B cell (primary cell): ENCODE measurements at regions of chr19 and their contacts with region 1.

Region 1: GRCh38 chr19:16143399-16144245 is at the start of gene HSH2D:
- DNase-seq: peak; percentile 95
- ATAC-seq: peak; percentile 71
- H3K4me3 ChIP-seq: peak within 1 kb of the TSS; percentile 73 to 94 (median 91)
- H3K4me3 Mint-ChIP-seq: peak within 1 kb of the TSS; percentile 95
- H3K27ac ChIP-seq: peak within 1 kb of the TSS; percentile 95 to 97
- H3K27ac Mint-ChIP-seq: peak within 1 kb of the TSS; percentile 100
- H3K4me1 ChIP-seq: peaks cover 71 to 93% of the 10 kb centered on the region in 2 donors
- H3K4me1 Mint-ChIP-seq: peaks cover 78% of the 10 kb centered on the region
- H3K27me3 ChIP-seq: no peaks in the 10 kb centered on the region
- H3K27me3 Mint-ChIP-seq: no peaks in the 10 kb centered on the region
- CTCF ChIP-seq: no peak
- total RNA-seq, gene HSH2D: 254 and 259 TPM in 2 replicates

Region 2: DNA sequence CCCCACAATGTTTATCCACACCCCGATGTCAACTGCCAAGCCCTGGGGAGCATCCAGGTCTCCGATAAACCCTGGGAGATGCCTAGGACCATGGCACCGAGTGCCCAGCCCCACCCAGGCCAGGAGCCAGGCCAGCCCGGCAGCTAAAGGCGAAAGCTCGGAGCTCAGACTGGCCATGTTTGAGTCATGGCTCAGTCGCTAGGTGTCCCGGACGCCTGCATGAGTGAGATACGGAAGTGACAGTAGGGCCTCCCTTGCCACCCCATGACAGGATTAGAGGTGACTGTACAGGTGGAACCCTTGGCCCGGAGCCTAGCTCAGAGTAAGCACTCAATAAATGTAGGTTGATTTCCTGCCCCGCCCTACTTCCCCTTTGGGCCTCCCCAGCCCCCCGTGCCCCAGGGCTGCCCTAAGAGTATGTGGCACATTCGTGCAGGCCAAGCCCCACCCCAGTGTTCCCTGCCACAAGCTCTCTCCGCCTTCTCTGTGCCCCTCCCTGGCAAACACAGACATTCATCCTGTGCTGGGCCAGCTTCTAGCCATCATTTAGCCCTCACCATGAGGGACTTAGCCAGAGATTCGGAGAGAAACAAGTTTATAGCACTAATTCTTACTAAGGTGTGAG is 73.1 kb before region 1 on chr19:
- CTCF ChIA-PET with region 1: interaction called, 7 read pairs
- POLR2A ChIA-PET with region 1: interaction called, 15 read pairs
- intact Hi-C with region 1: loop called (anchors 2 kb)
- DNase-seq: peak; percentile 95
- ATAC-seq: peak; percentile 91
- H3K4me3 ChIP-seq: peak overlapping the region in 4 of 5 experiments; percentile 30 to 56 (median 43)
- H3K4me3 Mint-ChIP-seq: no peak overlapping the region
- H3K27ac ChIP-seq: peak overlapping the region; percentile 96 to 98
- H3K27ac Mint-ChIP-seq: no peak overlapping the region
- H3K4me1 ChIP-seq: peaks cover 23 to 42% of the 10 kb centered on the region in 2 donors
- H3K4me1 Mint-ChIP-seq: peaks cover 26% of the 10 kb centered on the region
- H3K27me3 ChIP-seq: no peaks in the 10 kb centered on the region
- H3K27me3 Mint-ChIP-seq: no peaks in the 10 kb centered on the region
- CTCF ChIP-seq: peak; percentile 37

Region 3: DNA sequence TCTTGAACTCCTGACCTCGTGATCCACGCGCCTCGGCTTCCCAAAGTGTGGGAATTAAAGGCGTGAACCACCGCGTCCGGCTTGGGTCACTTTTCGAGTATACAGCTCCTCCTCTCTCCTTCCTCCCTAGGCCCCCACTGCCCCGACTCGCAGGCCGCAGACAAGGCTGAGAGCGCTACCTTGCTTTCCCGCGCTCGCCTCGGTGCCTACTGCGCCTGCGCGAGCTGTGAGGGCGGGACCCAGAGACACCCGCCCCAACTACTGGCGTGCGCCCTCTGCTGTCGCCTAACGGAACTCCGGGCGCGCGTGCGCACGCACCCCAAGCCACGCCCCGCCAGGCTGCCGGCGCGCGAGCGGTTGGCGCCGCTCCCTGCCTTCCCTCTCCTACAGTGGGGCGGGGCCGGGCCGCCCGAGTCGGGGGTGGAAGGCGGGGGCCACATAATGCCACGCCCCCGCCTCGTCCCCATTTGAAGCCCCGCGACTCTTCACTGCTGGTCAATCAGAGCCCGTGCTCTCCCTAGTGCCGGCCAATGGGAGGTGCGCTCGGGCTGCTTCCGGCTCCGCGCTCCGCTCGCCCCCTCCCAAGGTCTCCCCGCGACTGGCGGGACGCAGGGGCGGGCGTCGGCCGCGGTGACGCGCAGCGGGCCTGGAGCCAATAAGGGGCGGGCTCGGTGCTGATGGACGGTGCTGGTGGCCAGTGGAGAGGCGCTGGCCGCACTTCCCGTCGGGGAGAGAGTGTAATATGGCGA is 32.3 kb before region 1 on chr19 and contains the start of gene RAB8A:
- CTCF ChIA-PET with region 1: interaction called, 63 read pairs
- POLR2A ChIA-PET with region 1: interaction called, 33 read pairs
- intact Hi-C with region 1: loop called (anchors 1 kb)
- DNase-seq: peak; percentile 100
- ATAC-seq: peak; percentile 88
- H3K4me3 ChIP-seq: peak within 1 kb of the TSS; percentile 50 to 99 (median 96)
- H3K4me3 Mint-ChIP-seq: peak within 1 kb of the TSS; percentile 96
- H3K27ac ChIP-seq: peak within 1 kb of the TSS; percentile 74 to 97
- H3K27ac Mint-ChIP-seq: peak within 1 kb of the TSS; percentile 95
- H3K4me1 ChIP-seq: peaks cover 29 to 53% of the 10 kb centered on the region in 2 donors
- H3K4me1 Mint-ChIP-seq: peaks cover 42% of the 10 kb centered on the region
- H3K27me3 ChIP-seq: no peaks in the 10 kb centered on the region
- H3K27me3 Mint-ChIP-seq: no peaks in the 10 kb centered on the region
- CTCF ChIP-seq: peak; percentile 91
- total RNA-seq, gene RAB8A: 115 and 117 TPM in 2 replicates

Region 4: DNA sequence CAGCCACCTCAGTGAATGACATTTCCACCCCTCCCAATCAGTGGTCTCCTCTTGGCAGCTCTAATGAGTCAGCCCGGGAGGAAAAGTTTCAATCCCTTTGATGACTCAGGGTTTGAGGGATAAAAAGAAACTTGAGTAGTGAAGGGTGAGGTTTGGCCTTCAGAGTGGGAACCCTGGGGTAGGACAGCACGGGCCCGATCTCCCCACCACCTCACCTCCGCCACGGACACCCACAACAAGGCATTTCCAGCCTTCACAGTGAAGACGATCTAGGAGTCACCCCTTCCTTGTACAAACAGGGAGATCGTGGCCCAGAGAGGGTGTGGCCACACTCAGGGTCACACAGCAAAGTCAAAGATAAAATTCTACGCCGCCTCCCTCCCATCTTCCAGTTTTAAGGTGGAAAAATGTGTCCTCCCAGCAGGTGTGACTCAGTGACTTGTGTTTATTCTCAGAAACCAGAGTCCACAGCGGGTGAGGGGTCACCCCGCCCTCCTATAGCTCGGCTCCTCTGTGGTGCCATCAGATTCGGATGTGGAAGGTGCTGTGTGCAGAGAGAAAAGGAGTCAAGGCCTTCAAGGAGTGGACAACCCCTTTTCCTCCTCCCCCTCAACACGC is 17.4 kb after region 1 on chr19:
- CTCF ChIA-PET with region 1: interaction called, 4 read pairs
- POLR2A ChIA-PET with region 1: interaction called, 14 read pairs
- intact Hi-C with region 1: no loop called
- DNase-seq: no peak
- ATAC-seq: no peak
- H3K4me3 ChIP-seq: no peak overlapping the region
- H3K4me3 Mint-ChIP-seq: no peak overlapping the region
- H3K27ac ChIP-seq: no peak overlapping the region
- H3K27ac Mint-ChIP-seq: peak overlapping the region; percentile 46
- H3K4me1 ChIP-seq: peaks cover 0 to under 1% of the 10 kb centered on the region in 2 donors
- H3K4me1 Mint-ChIP-seq: peaks cover 6% of the 10 kb centered on the region
- H3K27me3 ChIP-seq: no peaks in the 10 kb centered on the region
- H3K27me3 Mint-ChIP-seq: no peaks in the 10 kb centered on the region
- CTCF ChIP-seq: no peak

Region 5: GRCh38 chr19:16259385-16260159 is 116.0 kb after region 1 on chr19:
- CTCF ChIA-PET with region 1: no interaction called
- POLR2A ChIA-PET with region 1: interaction called, 5 read pairs
- intact Hi-C with region 1: loop called (anchors 2 kb)
- DNase-seq: peak; percentile 94
- ATAC-seq: peak; percentile 79
- H3K4me3 ChIP-seq: peak overlapping the region in 1 of 5 experiments; percentile 42
- H3K4me3 Mint-ChIP-seq: peak overlapping the region; percentile 78
- H3K27ac ChIP-seq: peak overlapping the region; percentile 87 to 89
- H3K27ac Mint-ChIP-seq: peak overlapping the region; percentile 95
- H3K4me1 ChIP-seq: peaks cover 75 to 94% of the 10 kb centered on the region in 2 donors
- H3K4me1 Mint-ChIP-seq: peaks cover 83% of the 10 kb centered on the region
- H3K27me3 ChIP-seq: no peaks in the 10 kb centered on the region
- H3K27me3 Mint-ChIP-seq: no peaks in the 10 kb centered on the region
- CTCF ChIP-seq: no peak

Region 6: GRCh38 chr19:16446724-16447368 is 303.2 kb after region 1 on chr19:
- CTCF ChIA-PET with region 1: no interaction called
- POLR2A ChIA-PET with region 1: no interaction called
- intact Hi-C with region 1: loop called (anchors 2 kb)
- DNase-seq: peak; percentile 79
- ATAC-seq: peak; percentile 34
- H3K4me3 ChIP-seq: peak overlapping the region in 1 of 5 experiments; percentile 26
- H3K4me3 Mint-ChIP-seq: peak overlapping the region; percentile 76
- H3K27ac ChIP-seq: peak overlapping the region; percentile 93 to 98
- H3K27ac Mint-ChIP-seq: peak overlapping the region; percentile 97
- H3K4me1 ChIP-seq: peaks cover 86 to 94% of the 10 kb centered on the region in 2 donors
- H3K4me1 Mint-ChIP-seq: peaks cover 85% of the 10 kb centered on the region
- H3K27me3 ChIP-seq: no peaks in the 10 kb centered on the region
- H3K27me3 Mint-ChIP-seq: no peaks in the 10 kb centered on the region
- CTCF ChIP-seq: no peak